ENCODE measurements at regions of chr19 and their contacts with region 1.

Region 1: DNA sequence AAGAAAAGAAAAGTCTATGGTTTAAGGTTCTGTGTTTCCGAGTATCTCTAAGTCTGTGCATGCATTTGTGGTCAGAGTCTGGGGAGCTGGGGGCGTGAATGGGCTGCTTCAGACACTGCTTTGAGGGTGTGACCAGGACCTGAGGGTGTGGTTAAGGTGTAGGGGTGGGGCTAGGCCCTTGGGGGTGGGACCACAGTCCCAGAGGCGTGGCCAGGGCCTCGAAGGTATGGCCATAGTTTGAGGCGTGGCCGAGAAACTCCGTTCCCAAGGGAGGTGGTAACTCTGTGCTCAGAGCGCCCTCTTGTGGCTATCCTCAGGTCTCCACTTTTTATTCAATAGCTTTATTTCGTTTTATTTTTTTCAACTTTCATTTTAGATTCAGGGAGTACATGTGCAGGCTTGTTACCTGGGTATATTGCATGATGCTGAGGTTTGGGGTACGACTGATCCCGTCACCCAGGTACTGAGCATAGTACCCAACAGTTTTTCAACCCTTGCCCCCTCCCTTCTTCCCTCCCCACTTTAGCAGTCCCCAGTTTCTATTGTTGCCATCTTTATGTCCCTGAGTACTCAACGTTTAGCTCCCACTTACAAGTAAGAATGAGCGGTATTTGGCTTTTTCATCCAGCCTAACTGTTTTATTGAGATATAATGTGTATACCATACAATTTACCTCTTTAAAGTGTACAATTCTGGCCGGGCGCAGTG is 7.0 kb upstream of the CBLC start:
- DNase-seq: peak; percentile 99
- H3K4me3 Mint-ChIP-seq: peak overlapping the region; percentile 47
- H3K27ac Mint-ChIP-seq: peak overlapping the region; percentile 34
- H3K4me1 Mint-ChIP-seq: peaks cover 33% of the 10 kb centered on the region
- H3K27me3 Mint-ChIP-seq: peaks cover 8% of the 10 kb centered on the region

Region 2: GRCh38 chr19:44653977-44654774 is 116.5 kb before region 1 on chr19:
- intact Hi-C with region 1: loop called (anchors 1 kb)
- DNase-seq: peak; percentile 91
- H3K4me3 Mint-ChIP-seq: no peak overlapping the region
- H3K27ac Mint-ChIP-seq: no peak overlapping the region
- H3K4me1 Mint-ChIP-seq: peaks cover 11% of the 10 kb centered on the region
- H3K27me3 Mint-ChIP-seq: no peaks in the 10 kb centered on the region

Region 3: GRCh38 chr19:44689056-44689895 is 81.4 kb before region 1 on chr19:
- intact Hi-C with region 1: loop called (anchors 1 kb)
- DNase-seq: peak; percentile 93
- H3K4me3 Mint-ChIP-seq: no peak overlapping the region
- H3K27ac Mint-ChIP-seq: peak overlapping the region; percentile 27
- H3K4me1 Mint-ChIP-seq: peaks cover 38% of the 10 kb centered on the region
- H3K27me3 Mint-ChIP-seq: peaks cover 12% of the 10 kb centered on the region

Region 4: DNA sequence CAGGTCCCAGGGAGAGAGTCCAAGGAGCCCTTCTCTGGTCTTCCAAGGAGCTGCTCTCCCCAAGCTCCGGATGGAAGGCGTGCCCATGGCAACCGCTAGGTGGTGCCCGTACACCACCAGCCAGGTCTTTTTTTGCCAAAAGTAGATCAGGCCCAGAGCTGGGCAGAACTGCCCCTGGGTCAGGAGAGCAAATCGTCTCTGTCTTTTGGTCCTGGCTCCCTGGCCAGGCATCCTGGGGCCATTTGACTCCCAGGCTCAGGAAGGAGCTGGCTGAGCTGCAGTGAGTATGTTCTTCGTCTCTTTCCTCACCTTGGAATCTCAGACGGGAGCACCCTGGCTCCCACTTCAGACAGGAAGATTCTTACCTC is 46.8 kb before region 1 on chr19:
- intact Hi-C with region 1: loop called (anchors 1 kb)
- DNase-seq: peak; percentile 95
- H3K4me3 Mint-ChIP-seq: peak overlapping the region; percentile 40
- H3K27ac Mint-ChIP-seq: peak overlapping the region; percentile 45
- H3K4me1 Mint-ChIP-seq: peaks cover 46% of the 10 kb centered on the region
- H3K27me3 Mint-ChIP-seq: no peaks in the 10 kb centered on the region

Region 5: GRCh38 chr19:44746946-44747738 is 23.6 kb before region 1 on chr19:
- intact Hi-C with region 1: loop called (anchors 1 kb)
- DNase-seq: peak; percentile 97
- H3K4me3 Mint-ChIP-seq: peak overlapping the region; percentile 93
- H3K27ac Mint-ChIP-seq: peak overlapping the region; percentile 94
- H3K4me1 Mint-ChIP-seq: peaks cover 52% of the 10 kb centered on the region
- H3K27me3 Mint-ChIP-seq: peaks cover 4% of the 10 kb centered on the region

Region 6: DNA sequence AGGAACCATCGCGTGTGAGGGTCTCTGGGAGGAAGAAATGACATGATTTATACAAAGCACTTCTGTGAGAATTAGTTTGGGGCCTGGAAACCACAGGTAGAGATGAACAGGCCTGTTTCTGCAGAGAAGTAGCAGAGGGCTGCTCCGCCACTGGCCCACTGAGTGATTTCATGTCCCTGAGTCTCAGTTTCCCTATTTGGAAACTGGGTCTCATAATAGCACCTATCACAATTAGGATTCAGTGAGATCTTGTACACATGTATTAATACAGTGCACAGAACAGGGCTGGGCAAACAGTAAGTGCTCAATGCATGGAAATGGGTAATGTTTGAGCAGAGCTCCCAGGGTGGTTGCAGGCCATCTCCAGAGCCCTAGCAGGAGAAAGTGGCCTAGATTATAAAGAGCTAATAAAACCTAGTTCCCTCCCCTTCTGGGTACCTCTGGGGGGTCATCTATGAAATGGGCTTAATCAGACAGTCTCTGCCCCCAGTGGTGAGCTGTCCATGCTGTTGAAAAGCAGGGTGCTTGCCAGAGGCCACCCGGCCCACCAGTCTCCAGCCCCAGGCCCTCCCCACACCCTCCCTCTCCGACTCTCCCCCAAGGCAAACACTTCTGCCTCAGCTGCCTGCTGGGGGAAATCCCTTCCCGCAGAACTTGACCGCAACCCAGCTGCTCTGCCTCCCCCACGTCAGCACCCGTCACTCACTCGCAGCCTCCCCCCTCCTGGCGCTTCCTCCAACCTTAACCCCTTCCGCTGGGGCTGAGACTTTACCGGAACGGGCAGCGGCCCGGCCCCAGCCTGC is 17.7 kb before region 1 on chr19:
- intact Hi-C with region 1: loop called (anchors 1 kb)
- DNase-seq: peak; percentile 99
- H3K4me3 Mint-ChIP-seq: peak overlapping the region; percentile 95
- H3K27ac Mint-ChIP-seq: peak overlapping the region; percentile 84
- H3K4me1 Mint-ChIP-seq: peaks cover 62% of the 10 kb centered on the region
- H3K27me3 Mint-ChIP-seq: peaks cover 2% of the 10 kb centered on the region

Region 7: DNA sequence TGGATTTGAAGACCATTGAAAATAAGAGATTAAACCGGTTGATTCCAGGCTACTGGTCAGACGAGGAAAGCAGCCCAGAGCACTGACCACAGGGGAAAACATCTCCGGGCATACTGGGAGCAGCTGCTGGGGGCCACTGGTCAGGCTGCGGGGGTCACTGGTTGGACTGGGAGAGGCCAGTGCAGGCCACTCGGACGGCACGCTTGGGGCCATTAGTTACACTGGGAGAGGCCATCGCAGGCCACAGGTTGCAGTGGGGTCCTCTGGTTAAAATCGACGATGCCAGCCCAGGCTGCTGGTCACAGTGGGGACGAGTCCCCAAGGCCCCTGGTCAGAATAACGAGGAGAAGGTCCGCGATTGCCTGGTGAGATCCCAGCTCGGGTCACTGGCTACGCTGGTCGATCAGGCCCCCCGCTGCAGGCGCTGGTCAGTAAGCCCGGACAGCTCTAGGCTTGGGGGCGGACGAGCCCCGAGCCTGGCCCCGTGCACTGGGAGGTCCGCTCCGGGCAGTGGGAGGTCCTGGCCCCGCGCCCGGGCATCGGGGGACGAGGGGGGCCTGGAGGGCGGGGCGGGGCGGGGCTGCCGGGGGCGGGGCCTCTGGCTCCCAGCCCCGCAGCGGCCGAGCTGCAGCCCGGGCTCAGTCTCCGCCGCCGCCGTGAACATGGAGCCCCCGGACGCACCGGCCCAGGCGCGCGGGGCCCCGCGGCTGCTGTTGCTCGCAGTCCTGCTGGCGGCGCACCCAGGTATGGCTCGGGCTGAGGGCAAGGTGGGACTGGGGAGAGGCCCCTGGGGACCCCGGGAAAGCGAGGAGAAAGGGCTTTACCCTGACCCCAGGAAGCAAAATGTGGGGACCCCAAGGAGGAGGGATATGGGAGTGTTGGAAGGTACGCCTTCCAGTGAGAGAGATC is 38.0 kb after region 1 on chr19 and contains the start of gene BCAM:
- intact Hi-C with region 1: no loop called
- DNase-seq: no peak
- H3K4me3 Mint-ChIP-seq: no peak within 1 kb of the TSS
- H3K27ac Mint-ChIP-seq: no peak within 1 kb of the TSS
- H3K4me1 Mint-ChIP-seq: no peaks in the 10 kb centered on the region
- H3K27me3 Mint-ChIP-seq: peaks cover 12% of the 10 kb centered on the region
- total RNA-seq, gene BCAM: not detected in 2 replicates

Region 8: GRCh38 chr19:44875666-44876451 is 105.2 kb after region 1 on chr19:
- intact Hi-C with region 1: no loop called
- DNase-seq: no peak
- H3K4me3 Mint-ChIP-seq: no peak overlapping the region
- H3K27ac Mint-ChIP-seq: no peak overlapping the region
- H3K4me1 Mint-ChIP-seq: peaks cover 2% of the 10 kb centered on the region
- H3K27me3 Mint-ChIP-seq: no peaks in the 10 kb centered on the region

Region 9: DNA sequence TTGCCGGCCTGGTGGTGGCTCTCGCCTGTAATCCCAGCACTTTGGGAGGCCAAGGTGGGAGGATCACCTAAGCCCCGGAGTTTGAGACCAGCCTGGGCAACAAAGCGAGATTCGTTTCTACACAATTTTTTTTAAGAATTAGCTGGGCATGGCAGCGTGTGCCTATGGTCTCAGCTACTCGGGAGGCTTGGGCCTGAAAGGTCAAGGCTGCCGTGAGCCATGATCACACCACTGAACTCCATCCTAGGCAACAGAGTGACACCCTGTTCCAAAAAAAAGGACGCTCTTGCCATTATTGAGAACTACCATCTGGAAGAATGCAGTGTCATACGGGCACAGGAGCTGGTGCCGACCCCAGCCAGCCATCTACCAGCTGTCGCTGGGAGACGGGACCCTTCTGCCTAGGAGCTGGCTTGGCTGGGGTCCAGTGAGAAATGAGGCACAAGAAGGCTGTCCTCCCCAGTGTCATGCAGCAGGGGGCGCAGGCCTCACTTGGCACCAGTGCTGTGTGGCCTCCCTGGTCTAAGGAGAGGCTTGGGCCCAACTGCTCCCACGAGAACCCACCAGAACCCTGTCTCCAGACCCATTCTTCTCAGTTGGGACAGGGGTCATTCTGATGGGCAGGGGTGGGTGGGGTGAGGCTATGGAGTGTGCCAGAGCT is 218.3 kb after region 1 on chr19:
- intact Hi-C with region 1: no loop called
- DNase-seq: peak; percentile 88
- H3K4me3 Mint-ChIP-seq: no peak overlapping the region
- H3K27ac Mint-ChIP-seq: peak overlapping the region; percentile 43
- H3K4me1 Mint-ChIP-seq: peaks cover 6% of the 10 kb centered on the region
- H3K27me3 Mint-ChIP-seq: no peaks in the 10 kb centered on the region

Measured in activated CD4-positive, alpha-beta T cell treated with anti-CD3 and anti-CD28 coated beads, Interleukin-2, amount 10 ng/mL, durations not matched to agents 24 days and 14 days (primary cell).